GM13977 (cell line): ENCODE measurements at regions of chr5 and their contacts with region 1.

Region 1: DNA sequence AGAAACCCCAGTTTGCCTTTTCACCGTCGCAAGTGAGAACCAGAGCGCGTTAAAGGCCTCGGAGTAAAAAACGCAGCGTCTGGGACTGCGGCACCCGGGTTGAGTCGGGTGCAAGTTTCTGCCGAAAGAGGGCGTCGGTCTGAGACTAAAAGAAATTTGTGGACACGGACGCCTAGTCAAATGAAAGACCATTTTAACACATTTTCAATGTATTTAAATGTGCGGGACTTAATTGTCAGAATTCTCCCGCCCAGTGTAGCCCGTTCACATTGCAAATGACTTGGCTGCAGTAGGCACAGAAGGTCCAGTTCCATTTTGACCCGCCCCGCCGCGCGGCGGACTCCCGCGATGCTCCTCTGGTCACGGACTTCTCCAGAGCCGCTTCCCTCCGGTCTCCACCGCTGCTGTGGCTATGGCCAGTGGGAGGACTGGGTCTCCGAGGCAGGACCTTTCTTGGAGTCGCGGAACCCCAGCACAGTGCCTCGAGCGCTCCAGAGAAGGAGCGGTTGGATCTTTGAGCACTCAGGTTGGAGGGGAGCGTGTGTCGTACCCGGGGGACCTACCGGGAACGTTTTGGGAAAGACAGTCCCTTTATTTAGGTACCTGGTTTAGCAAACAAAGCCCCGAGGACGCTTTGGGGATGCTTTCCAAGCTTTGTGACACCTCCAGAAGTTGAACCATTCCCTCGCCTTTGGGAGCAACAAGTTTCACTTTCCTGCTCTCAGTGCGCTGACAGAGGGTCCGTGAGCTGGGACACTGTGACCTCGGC is 1.2 kb upstream of the NPR3 start:
- DNase-seq: peak; percentile 77
- CTCF ChIP-seq: peak; percentile 79

Region 2: DNA sequence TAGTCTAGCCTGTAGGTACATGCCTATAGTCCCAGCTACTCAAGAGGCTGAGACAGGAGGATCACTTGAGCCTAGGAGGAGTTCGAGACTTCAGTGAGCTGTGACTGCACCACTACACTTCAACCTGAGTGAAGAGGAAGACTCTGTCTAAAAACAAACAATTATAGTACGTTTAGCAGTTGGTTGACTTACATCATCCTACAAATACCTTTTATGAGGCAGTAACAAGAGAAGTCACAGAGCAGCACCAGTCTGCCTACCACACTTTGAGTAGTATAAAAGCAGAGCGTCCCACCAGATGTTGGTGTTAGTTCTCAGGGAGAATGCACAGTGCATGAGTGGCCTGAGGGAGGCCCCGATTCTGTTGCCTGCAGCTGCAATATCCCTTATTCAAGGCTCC is 281.5 kb before region 1 on chr5:
- in situ Hi-C with region 1: no loop called
- DNase-seq: no peak
- CTCF ChIP-seq: no peak

Region 3: GRCh38 chr5:33369485-33370472 is 659.8 kb after region 1 on chr5:
- in situ Hi-C with region 1: no loop called
- DNase-seq: no peak
- CTCF ChIP-seq: no peak

Region 4: DNA sequence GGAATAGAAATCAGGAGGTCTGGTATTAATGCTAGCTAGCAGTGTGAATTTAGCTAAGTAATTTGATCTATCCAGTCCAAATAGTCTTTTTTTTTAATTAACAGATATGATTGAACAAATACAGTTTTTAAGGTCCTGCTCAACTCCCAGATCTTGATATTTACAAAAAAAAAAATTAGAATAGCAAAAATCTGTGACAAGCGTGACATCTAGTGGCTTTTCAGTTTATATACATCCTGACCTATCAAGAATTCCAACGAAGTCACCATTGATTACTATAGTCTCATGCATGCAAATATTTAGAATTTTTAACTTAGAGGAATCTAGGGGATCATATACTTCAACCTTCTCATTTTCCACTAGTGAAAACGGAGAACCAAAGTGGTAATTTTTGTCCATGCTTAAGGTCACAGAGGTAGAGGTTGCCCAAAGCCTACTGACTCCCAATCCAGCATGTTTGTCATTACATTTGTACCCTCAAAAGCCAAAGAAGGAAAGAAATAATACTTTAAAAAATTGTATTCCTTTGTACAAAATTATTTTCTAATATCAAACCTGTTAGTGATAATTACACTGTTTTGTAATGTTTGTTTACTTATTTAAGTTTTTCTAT is 713.2 kb after region 1 on chr5:
- in situ Hi-C with region 1: loop called (anchors 25 kb)
- DNase-seq: no peak
- CTCF ChIP-seq: peak; percentile 44